Colonic mucosa (tissue), 4 donors: ENCODE measurements at regions of chr11 and their contacts with region 1.

Region 1: GRCh38 chr11:111878849-111879636 is at the starts of genes CFAP68 and FDXACB1:
- DNase-seq: peak; percentile 98
- H3K4me3 ChIP-seq: peak within 1 kb of the TSS; percentile 52
- H3K27ac ChIP-seq: peak within 1 kb of the TSS; percentile 91
- H3K4me1 ChIP-seq: no peaks in the 10 kb centered on the region
- H3K27me3 ChIP-seq: no peaks in the 10 kb centered on the region
- CTCF ChIP-seq: peak; percentile 94
- total RNA-seq, gene CFAP68: 18.8 to 20.0 TPM
- total RNA-seq, gene FDXACB1: 1.6 to 2.1 TPM

Region 2: GRCh38 chr11:111905411-111905810 is 26.4 kb after region 1 on chr11:
- intact Hi-C with region 1: no loop called
- DNase-seq: no peak
- H3K4me3 ChIP-seq: no peak overlapping the region
- H3K27ac ChIP-seq: no peak overlapping the region
- H3K4me1 ChIP-seq: no peaks in the 10 kb centered on the region
- H3K27me3 ChIP-seq: no peaks in the 10 kb centered on the region
- CTCF ChIP-seq: no peak

Region 3: GRCh38 chr11:111922803-111923202 is 43.8 kb after region 1 on chr11:
- intact Hi-C with region 1: loop called (anchors 5 kb)
- DNase-seq: peak; percentile 51
- H3K4me3 ChIP-seq: no peak overlapping the region
- H3K27ac ChIP-seq: no peak overlapping the region
- H3K4me1 ChIP-seq: peaks cover 7% of the 10 kb centered on the region
- H3K27me3 ChIP-seq: no peaks in the 10 kb centered on the region
- CTCF ChIP-seq: no peak

Region 4: GRCh38 chr11:111977146-111978027 is 98.3 kb after region 1 on chr11:
- intact Hi-C with region 1: loop called (anchors 5 kb)
- DNase-seq: peak; percentile 67
- H3K4me3 ChIP-seq: peak overlapping the region; percentile 46
- H3K27ac ChIP-seq: peak overlapping the region; percentile 34
- H3K4me1 ChIP-seq: no peaks in the 10 kb centered on the region
- H3K27me3 ChIP-seq: no peaks in the 10 kb centered on the region
- CTCF ChIP-seq: no peak